Gastrocnemius medialis (tissue), 4 donors: ENCODE measurements at regions of chr13 and their contacts with region 1.

Region 1: GRCh38 chr13:80454245-80454644 is 113.3 kb upstream of the SPRY2 start:
- DNase-seq: no peak
- ATAC-seq: no peak
- H3K4me3 ChIP-seq: no peak overlapping the region
- H3K27ac ChIP-seq: no peak overlapping the region
- H3K4me1 ChIP-seq: peaks cover 0 to 4% of the 10 kb centered on the region in 2 donors
- H3K27me3 ChIP-seq: no peaks in the 10 kb centered on the region
- CTCF ChIP-seq: no peak
- POLR2A ChIP-seq: no peak

Region 2: DNA sequence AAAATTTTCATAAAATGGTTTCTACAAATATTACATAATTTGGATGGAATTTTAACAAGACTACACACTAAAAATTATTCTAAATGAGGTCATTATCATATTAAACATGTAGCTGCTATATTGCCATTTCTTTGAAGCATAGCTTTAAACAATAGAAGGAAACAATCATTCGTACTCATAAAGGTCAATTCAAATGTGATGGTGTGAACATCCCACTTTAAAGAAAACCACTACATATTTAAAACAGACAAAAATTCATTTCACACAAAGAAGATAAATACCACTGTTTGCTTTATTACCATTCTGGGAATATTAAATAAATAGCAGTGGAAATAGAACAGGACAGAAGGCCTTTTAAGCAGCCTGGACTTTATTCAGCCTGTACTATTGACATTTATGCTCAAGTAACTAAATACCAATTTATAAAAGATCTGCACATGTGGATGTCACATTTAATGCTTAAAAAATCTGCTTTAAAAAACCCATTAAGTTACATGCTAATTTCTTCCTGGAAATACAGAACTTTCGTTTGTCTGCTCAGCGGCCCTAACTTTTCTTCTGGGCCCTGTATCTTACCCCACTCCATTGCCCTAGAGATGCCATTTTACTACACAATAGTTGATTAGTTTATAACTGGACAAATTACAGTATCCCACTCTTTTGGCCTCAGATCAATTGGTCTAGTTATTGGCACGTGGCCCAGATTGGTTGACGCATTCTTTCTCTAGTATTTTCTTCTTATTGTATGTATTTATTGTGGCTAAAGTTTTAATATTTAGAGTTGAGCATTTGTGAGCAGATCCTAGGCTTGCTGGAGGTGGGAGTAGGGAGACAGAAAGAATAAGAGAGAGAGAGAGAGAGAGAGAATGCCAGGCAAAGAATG is 101.8 kb after region 1 on chr13:
- in situ Hi-C with region 1: no loop called
- intact Hi-C with region 1: loop called (anchors 5 kb)
- DNase-seq: no peak
- ATAC-seq: no peak
- H3K4me3 ChIP-seq: no peak overlapping the region
- H3K27ac ChIP-seq: no peak overlapping the region
- H3K4me1 ChIP-seq: peaks cover 0 to 3% of the 10 kb centered on the region in 2 donors
- H3K27me3 ChIP-seq: no peaks in the 10 kb centered on the region
- CTCF ChIP-seq: no peak
- POLR2A ChIP-seq: no peak

Region 3: GRCh38 chr13:80802946-80803345 is 348.7 kb after region 1 on chr13:
- in situ Hi-C with region 1: no loop called
- intact Hi-C with region 1: no loop called
- DNase-seq: no peak
- ATAC-seq: no peak
- H3K4me3 ChIP-seq: no peak overlapping the region
- H3K27ac ChIP-seq: no peak overlapping the region
- H3K4me1 ChIP-seq: no peaks in the 10 kb centered on the region
- H3K27me3 ChIP-seq: no peaks in the 10 kb centered on the region
- CTCF ChIP-seq: no peak
- POLR2A ChIP-seq: no peak